Transverse colon (tissue), 4 donors: ENCODE measurements at regions of chr10 and their contacts with region 1.

Region 1: DNA sequence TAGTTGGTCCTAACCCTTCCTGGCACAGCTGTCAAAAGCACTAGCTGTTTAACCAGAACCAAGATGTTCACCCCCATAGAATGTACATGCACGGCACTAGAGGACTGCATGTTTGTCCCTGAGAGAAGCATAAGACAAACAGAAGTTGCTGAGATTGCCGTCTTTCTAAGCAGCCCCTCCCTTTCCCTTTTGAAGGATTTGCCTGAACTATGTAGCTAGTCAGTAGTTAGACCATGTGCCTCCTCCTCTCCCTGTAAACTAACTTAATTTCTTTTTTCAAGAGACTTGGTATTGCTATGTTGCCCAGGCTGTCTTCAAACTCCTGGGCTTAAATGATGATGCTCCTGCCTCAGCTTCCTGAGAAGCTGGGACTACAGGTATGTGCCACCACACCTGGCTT is 40.7 kb downstream of the TBC1D12 start:
- DNase-seq: no peak
- H3K4me3 ChIP-seq: no peak overlapping the region
- H3K27ac ChIP-seq: no peak overlapping the region
- H3K4me1 ChIP-seq: peaks cover 0 to 17% (median 0%) of the 10 kb centered on the region in 4 donors
- H3K27me3 ChIP-seq: no peaks in the 10 kb centered on the region
- CTCF ChIP-seq: no peak
- EP300 ChIP-seq: no peak
- POLR2A ChIP-seq: no peak

Region 2: DNA sequence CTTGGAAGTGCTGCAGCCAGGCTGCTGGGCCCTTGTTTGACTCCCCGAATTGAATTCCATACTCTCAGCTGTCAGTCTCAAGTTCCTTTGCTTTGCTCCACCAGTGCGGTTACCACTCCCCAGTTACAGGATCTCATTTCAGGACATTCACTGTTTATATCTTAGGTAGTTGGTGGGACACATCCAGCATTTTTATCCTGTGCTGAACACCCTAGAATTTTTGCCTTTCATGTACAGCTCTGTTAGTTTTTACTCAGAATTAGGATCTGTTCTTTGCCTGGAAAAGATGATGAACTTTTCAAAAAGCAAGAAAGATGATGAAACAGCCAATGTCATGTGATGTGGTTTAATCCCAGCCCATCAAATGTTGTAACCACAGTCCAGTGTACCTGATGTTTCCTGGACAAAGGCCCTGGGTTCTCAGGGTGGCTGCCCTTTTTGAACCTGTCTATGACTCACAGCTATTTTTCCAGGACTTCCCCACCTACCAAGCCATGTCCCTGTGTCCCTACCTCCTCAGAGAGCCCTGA is 230.0 kb before region 1 on chr10:
- in situ Hi-C with region 1: no loop called
- intact Hi-C with region 1: no loop called
- DNase-seq: peak; percentile 14
- H3K4me3 ChIP-seq: no peak overlapping the region
- H3K27ac ChIP-seq: peak overlapping the region in 1 of 4 donors; percentile 32
- H3K4me1 ChIP-seq: no peaks in the 10 kb centered on the region
- H3K27me3 ChIP-seq: no peaks in the 10 kb centered on the region
- CTCF ChIP-seq: no peak
- EP300 ChIP-seq: no peak
- POLR2A ChIP-seq: no peak

Region 3: DNA sequence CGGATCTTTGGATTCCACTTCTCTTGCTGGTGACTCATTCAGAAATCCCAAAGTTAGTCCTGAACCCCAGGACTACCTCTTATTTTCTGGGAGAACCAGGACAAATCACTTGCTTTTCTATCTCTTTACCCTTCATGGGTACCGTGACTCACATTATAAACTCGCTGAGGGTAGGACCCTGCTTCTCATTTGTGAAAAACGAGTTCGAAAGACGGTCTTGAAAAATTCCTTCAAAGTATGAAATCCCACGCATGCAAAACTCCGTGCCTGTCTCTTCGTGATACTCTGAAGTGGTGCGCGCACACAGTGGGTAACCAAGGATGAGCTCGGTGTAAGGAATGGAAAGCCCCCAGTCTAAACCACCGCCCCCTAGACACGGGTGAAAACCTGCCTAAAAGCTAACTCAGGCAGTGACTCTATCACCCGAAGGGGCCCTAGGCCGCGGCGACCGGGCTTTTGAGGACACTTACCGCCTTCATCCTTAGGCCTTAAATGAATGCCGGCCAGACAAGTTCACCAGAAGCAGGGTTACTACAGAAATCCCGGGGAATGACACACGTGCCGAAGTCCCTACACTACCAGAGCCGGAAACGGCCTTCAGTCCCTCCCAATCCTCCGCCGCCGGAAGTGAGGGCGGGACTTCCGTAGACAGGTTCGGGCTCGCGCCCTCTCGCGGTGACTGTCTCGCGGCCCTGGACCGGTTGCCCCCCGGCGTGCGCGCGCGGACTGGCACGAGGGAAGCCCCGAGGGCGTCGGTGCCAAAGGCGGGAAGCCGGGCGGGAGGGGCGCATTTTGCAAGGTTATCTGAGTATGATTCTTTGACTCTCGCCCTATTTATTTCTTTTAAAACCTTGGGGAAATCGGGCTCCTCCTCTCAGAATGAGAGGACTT is 80.4 kb before region 1 on chr10 and contains the start of gene NOC3L:
- in situ Hi-C with region 1: no loop called
- intact Hi-C with region 1: loop called (anchors 10 kb)
- DNase-seq: peak; percentile 98
- H3K4me3 ChIP-seq: peak within 1 kb of the TSS; percentile 35 to 78 (median 55)
- H3K27ac ChIP-seq: peak within 1 kb of the TSS; percentile 75 to 83 (median 78)
- H3K4me1 ChIP-seq: peaks cover 9 to 22% (median 15%) of the 10 kb centered on the region in 4 donors
- H3K27me3 ChIP-seq: no peaks in the 10 kb centered on the region
- CTCF ChIP-seq: peak; percentile 79 to 93 (median 90)
- EP300 ChIP-seq: no peak
- POLR2A ChIP-seq: peak; percentile 19
- total RNA-seq, gene NOC3L: 0.20 to 11.7 (median 3.4) TPM